AG04449 (cell line): ENCODE measurements at regions of chr1 and their contacts with region 1.

Region 1: GRCh38 chr1:221203224-221204054 is 324.2 kb downstream of the HLX start:
- DNase-seq: no peak
- H3K4me3 ChIP-seq: no peak overlapping the region
- CTCF ChIP-seq: peak; percentile 87

Region 2: DNA sequence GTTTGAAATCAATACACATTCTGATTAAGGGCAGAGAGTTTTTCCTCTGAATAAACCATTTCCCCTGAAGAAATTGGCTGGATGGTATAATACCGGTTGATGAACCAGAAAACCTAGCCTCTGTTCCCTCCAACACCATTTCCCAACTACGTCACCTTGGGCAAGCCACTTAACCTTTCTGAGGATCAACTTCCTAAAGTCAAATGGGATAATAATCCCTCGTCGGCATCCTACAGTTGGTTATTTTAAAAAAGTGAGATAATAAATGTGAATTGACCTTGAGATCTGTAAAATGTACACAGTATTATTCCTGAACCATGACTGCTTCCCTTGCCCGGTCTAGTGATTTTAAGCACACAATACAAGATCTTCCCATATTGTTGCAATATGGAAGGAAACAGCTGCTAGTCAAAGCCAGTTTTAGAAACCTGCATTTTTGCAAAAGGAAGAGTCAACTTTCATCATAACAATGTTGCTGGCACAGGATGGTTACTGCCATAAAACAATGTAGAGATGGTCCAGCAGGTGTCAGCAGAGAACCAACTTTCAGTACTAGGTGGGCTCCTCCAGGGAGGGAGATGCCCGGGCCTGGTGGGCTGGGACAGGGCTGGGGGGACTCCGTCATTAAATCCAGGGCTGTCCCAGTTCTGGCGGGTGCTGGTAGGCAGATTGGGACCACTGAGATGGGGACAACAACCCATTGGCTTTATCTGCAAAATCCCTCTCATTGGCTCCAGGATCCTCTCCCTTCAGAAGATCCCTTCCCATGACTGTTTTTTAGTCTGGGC is 329.4 kb before region 1 on chr1:
- CTCF ChIA-PET with region 1: interaction called, 145 read pairs
- POLR2A ChIA-PET with region 1: interaction called, 3 read pairs
- DNase-seq: no peak
- H3K4me3 ChIP-seq: no peak overlapping the region
- CTCF ChIP-seq: peak; percentile 70

Region 3: DNA sequence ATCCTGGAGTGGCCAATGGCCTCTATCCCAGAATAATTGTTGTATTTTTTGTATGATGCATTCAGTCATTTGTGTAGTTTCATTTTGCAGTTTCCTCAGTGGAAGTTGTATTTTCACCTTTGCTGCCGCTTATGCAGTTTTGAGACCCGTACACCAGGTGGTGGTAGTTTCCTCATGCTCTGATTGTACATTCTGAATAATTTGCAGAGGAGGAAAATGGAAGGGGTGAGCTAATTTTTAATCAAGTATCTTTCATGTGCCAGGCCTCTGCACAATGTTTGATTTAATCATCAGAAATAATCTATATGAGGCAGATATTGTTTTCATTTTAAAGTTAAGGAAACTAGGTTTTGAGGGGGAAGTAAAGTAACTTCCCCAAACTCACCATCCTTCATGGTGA is 294.7 kb before region 1 on chr1:
- CTCF ChIA-PET with region 1: interaction called, 45 read pairs
- POLR2A ChIA-PET with region 1: no interaction called
- DNase-seq: no peak
- H3K4me3 ChIP-seq: no peak overlapping the region
- CTCF ChIP-seq: peak; percentile 46

Region 4: DNA sequence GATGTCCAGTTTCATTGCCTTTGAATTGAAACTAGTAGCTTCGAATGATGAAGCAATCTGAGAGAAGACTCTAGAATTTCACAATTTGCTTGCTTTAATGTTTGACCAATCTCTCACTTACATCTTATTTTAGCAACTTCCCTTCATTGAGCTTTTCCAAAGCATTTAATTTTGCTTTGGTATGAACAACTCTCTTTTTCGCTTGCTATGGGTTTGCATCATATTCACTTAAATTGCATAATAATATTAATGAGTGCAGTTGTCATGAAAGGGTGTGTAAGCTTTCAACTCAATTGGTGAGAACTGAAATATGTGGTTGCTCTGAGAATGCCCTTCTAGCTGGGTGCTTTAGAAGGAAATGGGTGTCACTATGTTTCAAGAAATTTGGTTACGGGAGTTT is 15.0 kb before region 1 on chr1:
- CTCF ChIA-PET with region 1: interaction called, 24 read pairs
- POLR2A ChIA-PET with region 1: no interaction called
- DNase-seq: no peak
- H3K4me3 ChIP-seq: no peak overlapping the region
- CTCF ChIP-seq: no peak

Region 5: DNA sequence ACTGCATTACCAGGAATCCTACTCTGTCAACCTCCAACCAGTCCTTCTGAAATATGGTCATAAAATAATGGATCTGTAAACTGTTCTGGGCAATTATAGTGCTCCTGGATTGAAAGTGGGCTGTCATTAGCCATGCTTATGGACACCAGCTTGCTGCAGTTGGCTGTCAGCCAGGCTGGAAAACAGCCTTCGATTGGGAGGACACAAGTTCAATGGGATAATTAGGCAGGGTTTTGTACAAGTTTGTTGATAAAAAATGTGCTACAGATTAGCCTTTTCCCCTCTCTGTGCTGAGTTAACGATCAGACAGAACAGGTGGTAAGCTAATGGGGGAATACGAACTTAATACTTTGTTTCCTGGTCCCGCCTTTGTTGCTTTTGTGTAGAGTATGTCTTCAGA is 124.5 kb after region 1 on chr1:
- CTCF ChIA-PET with region 1: no interaction called
- POLR2A ChIA-PET with region 1: no interaction called
- DNase-seq: no peak
- H3K4me3 ChIP-seq: no peak overlapping the region
- CTCF ChIP-seq: no peak

Region 6: GRCh38 chr1:221435504-221435904 is 232.1 kb after region 1 on chr1:
- CTCF ChIA-PET with region 1: interaction called, 33 read pairs
- POLR2A ChIA-PET with region 1: no interaction called
- DNase-seq: no peak
- H3K4me3 ChIP-seq: no peak overlapping the region
- CTCF ChIP-seq: peak; percentile 78